Aorta (tissue), 5 donors: ENCODE measurements at regions of chr10 and their contacts with region 1.

Region 1: GRCh38 chr10:90592638-90593302 is 265.1 kb downstream of the HTR7 start:
- DNase-seq: peak; percentile 77 to 85
- ATAC-seq: peak; percentile 70
- H3K4me3 ChIP-seq: no peak overlapping the region
- H3K27ac ChIP-seq: no peak overlapping the region
- H3K4me1 ChIP-seq: no peaks in the 10 kb centered on the region
- H3K27me3 ChIP-seq: no peaks in the 10 kb centered on the region

Region 2: GRCh38 chr10:89954787-89955566 is 637.8 kb before region 1 on chr10:
- intact Hi-C with region 1: loop called in 1 of 2 experiments (anchors 5 kb)
- DNase-seq: no peak
- ATAC-seq: no peak
- H3K4me3 ChIP-seq: no peak overlapping the region
- H3K27ac ChIP-seq: no peak overlapping the region
- H3K4me1 ChIP-seq: no peaks in the 10 kb centered on the region
- H3K27me3 ChIP-seq: no peaks in the 10 kb centered on the region

Region 3: DNA sequence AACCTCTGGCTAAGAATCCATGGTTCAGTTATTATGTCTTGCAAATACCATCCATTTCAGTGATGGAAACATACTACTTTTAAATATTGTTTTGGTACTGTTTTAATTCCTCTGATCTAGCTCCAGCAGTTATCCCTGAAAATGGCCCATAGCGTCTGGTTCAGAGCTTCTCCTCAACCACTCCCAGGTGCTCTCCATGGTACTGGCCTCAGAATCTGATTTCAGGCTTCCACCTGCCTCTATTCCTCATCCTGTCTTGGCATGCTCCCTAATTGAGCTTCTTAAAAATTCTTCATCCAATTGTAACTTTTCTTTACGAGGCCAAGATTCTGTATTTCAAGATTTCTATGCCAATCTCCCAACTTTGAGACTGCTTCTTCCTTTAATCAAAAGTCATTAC is 28.8 kb after region 1 on chr10:
- intact Hi-C with region 1: no loop called
- DNase-seq: no peak
- ATAC-seq: no peak
- H3K4me3 ChIP-seq: no peak overlapping the region
- H3K27ac ChIP-seq: no peak overlapping the region
- H3K4me1 ChIP-seq: no peaks in the 10 kb centered on the region
- H3K27me3 ChIP-seq: no peaks in the 10 kb centered on the region